ENCODE measurements at regions of chr20 and their contacts with region 1.

Region 1: GRCh38 chr20:59598625-59599310 is 5.6 kb upstream of the PHACTR3 start:
- DNase-seq: peak; percentile 59
- ATAC-seq: peak; percentile 95
- H3K4me3 Mint-ChIP-seq: no peak overlapping the region
- H3K27ac Mint-ChIP-seq: no peak overlapping the region
- H3K4me1 Mint-ChIP-seq: no peaks in the 10 kb centered on the region
- H3K27me3 Mint-ChIP-seq: peaks cover 96% of the 10 kb centered on the region
- CTCF ChIP-seq: peak; percentile 90

Region 2: GRCh38 chr20:59608871-59609270 is 10.1 kb after region 1 on chr20:
- CTCF ChIA-PET with region 1: interaction called, 13 read pairs
- POLR2A ChIA-PET with region 1: no interaction called
- DNase-seq: no peak
- ATAC-seq: no peak
- H3K4me3 Mint-ChIP-seq: no peak overlapping the region
- H3K27ac Mint-ChIP-seq: no peak overlapping the region
- H3K4me1 Mint-ChIP-seq: 0 out of 2 replicates have a peak, but pooled peaks cover 2% of the 10 kb centered on the region
- H3K27me3 Mint-ChIP-seq: peaks cover 86% of the 10 kb centered on the region
- CTCF ChIP-seq: no peak

Region 3: DNA sequence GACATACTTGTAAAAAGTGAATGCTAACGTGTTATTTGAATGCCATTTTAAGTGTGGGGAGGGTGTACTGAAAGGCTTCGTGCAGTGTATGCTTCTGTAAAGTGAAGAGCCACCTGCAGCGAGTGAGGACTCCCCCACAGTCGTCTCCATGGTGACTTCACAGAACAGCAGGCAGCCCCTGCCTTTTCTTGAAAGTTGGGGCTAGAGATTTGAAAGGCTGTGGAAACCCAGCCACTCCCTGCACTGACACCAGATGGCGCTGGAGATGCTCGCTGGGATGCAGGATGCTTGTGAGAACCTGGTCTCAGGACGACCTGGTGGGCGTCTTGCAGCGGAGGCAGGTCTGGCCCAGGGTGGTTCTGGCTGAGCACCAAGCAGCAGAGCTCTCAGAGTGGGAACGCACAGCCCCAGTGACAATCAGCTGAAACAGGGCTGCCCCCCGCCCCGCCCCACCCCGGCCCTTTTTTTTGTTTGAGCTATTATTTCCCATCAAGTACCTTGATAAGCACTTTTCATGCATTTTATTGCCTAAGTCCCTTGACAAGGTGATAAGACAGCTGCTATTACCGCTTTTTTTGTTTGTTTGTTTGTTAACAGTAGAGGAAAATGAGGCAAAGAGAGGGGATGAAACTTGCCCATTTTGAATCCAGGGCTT is 184.3 kb after region 1 on chr20:
- CTCF ChIA-PET with region 1: no interaction called
- POLR2A ChIA-PET with region 1: no interaction called
- DNase-seq: peak; percentile 87
- ATAC-seq: peak; percentile 94
- H3K4me3 Mint-ChIP-seq: no peak overlapping the region
- H3K27ac Mint-ChIP-seq: no peak overlapping the region
- H3K4me1 Mint-ChIP-seq: no peaks in the 10 kb centered on the region
- H3K27me3 Mint-ChIP-seq: peaks cover 8% of the 10 kb centered on the region
- CTCF ChIP-seq: peak; percentile 63

Region 4: DNA sequence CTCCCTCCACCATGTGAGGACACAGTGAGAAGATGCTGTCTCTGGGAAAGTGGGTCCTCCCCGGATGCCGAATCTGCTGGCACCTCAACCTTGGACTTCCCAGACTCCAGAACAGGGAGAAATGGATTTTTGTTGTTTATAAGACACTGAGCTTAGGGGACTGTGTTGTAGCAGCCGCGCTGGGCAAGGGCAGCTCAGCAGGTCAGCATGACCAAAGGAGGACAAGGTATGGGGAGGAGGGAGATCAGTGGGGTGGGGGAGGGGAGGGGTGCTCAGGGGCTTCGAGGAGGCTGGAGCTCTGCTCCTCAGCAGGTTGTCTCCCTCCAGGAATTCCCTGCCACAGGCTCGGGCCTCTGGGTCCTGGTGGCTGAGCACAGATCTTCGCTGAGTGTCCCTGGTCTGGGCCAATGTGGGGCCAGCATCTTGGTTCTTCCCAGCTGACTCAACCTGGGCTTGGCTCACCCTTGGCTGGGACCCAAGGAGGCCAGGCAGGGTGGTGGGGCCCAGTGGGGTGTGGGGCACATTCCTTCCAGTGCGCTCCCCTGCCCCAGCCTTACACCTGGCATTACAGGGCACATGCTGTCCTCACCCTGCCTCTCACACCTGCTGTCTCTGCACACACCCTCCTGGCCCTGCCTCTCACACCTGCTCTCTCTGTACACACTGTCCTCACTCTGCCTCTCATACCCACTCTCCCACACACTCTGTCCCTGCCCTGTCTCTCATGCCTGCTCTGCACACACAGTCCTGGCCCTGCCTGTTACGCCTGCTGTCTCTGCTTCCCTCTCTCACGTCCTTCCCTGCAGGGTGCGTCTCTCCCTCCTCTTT is 227.4 kb after region 1 on chr20:
- CTCF ChIA-PET with region 1: no interaction called
- POLR2A ChIA-PET with region 1: no interaction called
- DNase-seq: no peak
- ATAC-seq: no peak
- H3K4me3 Mint-ChIP-seq: no peak overlapping the region
- H3K27ac Mint-ChIP-seq: no peak overlapping the region
- H3K4me1 Mint-ChIP-seq: peaks cover 14% of the 10 kb centered on the region
- H3K27me3 Mint-ChIP-seq: peaks cover 32% of the 10 kb centered on the region
- CTCF ChIP-seq: no peak

Measured in WTC11 (cell line).